Activated CD4-positive, alpha-beta T cell treated with anti-CD3 and anti-CD28 coated beads, Interleukin-2, amount 10 ng/mL, durations not matched to agents 24 days and 14 days (primary cell): ENCODE measurements at regions of chr6 and their contacts with region 1.

Region 1: GRCh38 chr6:109705258-109705657 is 14.2 kb downstream of the FIG4 start:
- DNase-seq: peak; percentile 91
- H3K4me3 Mint-ChIP-seq: no peak overlapping the region
- H3K27ac Mint-ChIP-seq: no peak overlapping the region
- H3K4me1 Mint-ChIP-seq: peaks cover 3% of the 10 kb centered on the region
- H3K27me3 Mint-ChIP-seq: no peaks in the 10 kb centered on the region

Region 2: DNA sequence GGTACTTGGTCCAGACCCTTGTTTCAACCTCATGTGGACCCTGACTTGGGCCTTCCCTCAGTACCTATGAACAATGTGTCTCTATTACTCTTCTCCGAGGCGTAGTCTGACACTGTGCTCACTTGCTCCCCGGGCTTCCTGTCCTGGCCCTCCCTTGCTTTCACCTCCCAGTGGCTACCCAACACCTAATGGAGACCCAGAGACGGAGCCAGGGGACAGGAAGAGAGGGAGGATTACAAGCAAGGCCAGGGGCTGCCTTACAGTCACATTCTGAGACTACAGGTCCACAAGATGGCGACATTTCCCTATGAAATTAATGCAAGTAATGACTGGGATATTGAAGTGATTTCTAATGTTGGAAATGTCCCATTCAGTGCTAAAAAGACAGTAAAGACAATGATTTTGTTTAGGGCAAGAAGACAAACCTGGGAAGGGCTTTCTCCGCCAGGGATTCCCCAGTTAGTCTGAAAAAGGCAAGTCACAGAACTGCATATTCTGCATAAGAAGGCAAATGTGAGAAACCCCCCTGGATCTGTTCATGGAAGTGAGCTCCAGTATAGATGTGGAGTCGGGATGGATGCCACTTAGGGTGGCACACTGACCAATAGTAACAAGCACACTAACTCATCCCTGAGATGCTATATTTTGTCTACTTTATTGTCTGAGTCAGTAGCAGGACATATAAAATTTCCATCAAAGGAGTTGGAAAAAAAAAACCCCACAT is 178.2 kb before region 1 on chr6:
- intact Hi-C with region 1: loop called (anchors 1 kb)
- DNase-seq: peak; percentile 89
- H3K4me3 Mint-ChIP-seq: no peak overlapping the region
- H3K27ac Mint-ChIP-seq: no peak overlapping the region
- H3K4me1 Mint-ChIP-seq: peaks cover 4% of the 10 kb centered on the region
- H3K27me3 Mint-ChIP-seq: peaks cover 8% of the 10 kb centered on the region

Region 3: DNA sequence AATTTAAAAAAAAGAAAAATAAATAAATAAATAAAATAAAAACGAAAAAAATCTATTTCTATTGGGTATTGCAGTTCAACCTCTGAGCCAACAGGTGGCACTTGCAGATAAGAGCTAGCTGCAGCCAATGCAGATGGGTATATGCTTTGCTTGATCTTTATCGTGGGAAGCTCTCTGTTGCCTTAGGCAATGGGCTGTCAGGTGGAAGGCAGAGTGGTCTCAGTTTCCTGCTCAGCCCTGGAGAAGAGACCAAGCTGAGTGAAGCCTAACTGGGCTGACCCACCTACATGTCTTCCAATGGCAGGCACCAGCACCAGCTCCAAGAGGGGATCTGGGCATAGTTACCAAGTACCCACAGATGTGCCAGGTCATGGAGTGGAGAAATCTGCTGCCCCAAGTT is 109.3 kb before region 1 on chr6:
- intact Hi-C with region 1: loop called (anchors 1 kb)
- DNase-seq: peak; percentile 63
- H3K4me3 Mint-ChIP-seq: no peak overlapping the region
- H3K27ac Mint-ChIP-seq: no peak overlapping the region
- H3K4me1 Mint-ChIP-seq: peaks cover 1% of the 10 kb centered on the region
- H3K27me3 Mint-ChIP-seq: no peaks in the 10 kb centered on the region

Region 4: DNA sequence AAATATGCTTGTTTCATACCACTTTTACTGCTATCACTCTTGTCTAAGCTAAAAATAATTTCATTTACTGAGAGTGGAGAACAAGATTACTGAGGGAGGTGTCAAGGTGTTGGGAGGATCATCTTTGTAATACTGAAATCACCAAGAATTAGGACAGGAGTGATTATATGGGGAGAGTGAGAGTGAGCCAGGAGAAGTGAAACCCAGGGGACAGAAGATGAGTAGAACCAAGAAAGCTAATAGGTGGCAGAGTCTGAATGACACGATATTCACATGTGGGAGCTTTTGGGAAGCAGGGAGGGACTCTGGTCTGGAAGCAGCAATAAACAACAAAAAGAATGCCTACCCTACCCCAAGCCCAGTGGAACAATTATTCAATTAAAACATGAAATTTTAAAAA is 72.9 kb before region 1 on chr6:
- intact Hi-C with region 1: no loop called
- DNase-seq: no peak
- H3K4me3 Mint-ChIP-seq: no peak overlapping the region
- H3K27ac Mint-ChIP-seq: no peak overlapping the region
- H3K4me1 Mint-ChIP-seq: peaks cover 9% of the 10 kb centered on the region
- H3K27me3 Mint-ChIP-seq: no peaks in the 10 kb centered on the region

Region 5: GRCh38 chr6:109867009-109867969 is 162.0 kb after region 1 on chr6:
- intact Hi-C with region 1: loop called (anchors 10 kb)
- DNase-seq: no peak
- H3K4me3 Mint-ChIP-seq: no peak overlapping the region
- H3K27ac Mint-ChIP-seq: no peak overlapping the region
- H3K4me1 Mint-ChIP-seq: no peaks in the 10 kb centered on the region
- H3K27me3 Mint-ChIP-seq: peaks cover 7% of the 10 kb centered on the region

Region 6: DNA sequence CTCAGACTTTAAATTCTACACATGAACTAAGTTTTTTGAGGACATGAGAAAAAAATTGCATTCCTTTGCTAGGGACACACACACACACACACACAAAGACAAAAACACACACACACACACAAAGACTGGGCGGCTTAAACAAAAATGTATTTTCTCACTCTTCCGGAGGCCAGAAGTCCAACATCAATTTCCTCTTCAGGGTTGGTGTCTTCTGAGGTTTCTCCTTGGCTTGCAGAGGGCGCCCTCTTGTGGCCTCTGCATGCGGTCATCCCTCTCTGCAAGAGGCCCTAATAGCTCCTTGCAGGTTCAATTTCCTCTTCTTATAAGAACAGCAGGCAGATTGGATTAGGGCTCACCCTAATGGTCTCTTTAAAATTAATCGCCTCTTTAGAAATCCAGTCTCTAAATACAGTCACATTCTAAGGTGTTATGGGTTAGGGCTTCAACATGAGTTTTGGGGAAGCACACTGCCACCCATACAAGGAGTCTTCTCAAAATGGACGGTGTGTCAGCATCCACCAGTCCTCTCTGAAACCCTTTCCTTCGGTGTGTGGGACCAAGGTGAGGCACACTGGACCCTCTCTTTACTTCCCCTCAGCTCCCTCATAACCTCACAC is 334.2 kb after region 1 on chr6:
- intact Hi-C with region 1: loop called (anchors 1 kb)
- DNase-seq: peak; percentile 94
- H3K4me3 Mint-ChIP-seq: peak overlapping the region; percentile 82
- H3K27ac Mint-ChIP-seq: peak overlapping the region; percentile 84
- H3K4me1 Mint-ChIP-seq: peaks cover 14% of the 10 kb centered on the region
- H3K27me3 Mint-ChIP-seq: peaks cover 1% of the 10 kb centered on the region

Region 7: GRCh38 chr6:110053395-110054240 is 348.4 kb after region 1 on chr6:
- intact Hi-C with region 1: loop called (anchors 1 kb)
- DNase-seq: peak; percentile 65
- H3K4me3 Mint-ChIP-seq: no peak overlapping the region
- H3K27ac Mint-ChIP-seq: no peak overlapping the region
- H3K4me1 Mint-ChIP-seq: no peaks in the 10 kb centered on the region
- H3K27me3 Mint-ChIP-seq: peaks cover 28% of the 10 kb centered on the region

Region 8: DNA sequence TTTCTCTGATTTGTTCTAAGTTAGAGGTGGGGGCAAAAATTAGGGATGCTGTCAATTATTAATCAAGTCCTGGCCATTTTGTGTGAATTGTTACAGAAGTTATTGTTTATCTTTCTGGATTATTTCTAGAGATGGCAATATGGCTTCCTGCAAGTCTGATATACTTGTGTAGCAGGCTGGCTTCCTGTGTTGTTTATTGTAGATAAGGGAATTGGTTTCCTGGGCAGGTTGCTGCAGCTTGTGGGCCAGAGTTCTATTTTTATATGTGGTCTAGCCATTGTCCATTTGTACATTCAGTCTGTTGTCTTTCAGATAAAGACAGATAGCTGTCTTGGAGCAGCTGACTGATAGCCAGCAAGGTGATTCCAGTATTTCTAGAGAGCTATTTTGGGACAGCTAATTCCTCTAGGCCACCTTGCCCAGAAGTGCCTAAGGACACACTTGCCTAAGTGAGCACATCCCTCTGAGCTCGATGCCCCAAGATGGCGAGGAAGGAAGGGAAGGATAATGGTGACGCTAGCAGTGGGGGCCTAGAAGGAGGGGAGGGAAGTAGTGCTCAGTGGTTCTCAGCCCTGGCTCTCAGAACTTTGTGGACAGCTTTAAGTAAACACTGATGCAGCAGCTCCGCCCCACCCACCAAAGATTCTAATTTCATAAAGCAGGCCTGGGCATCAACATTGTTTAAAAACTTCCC is 684.6 kb after region 1 on chr6:
- intact Hi-C with region 1: loop called (anchors 1 kb)
- DNase-seq: no peak
- H3K4me3 Mint-ChIP-seq: no peak overlapping the region
- H3K27ac Mint-ChIP-seq: no peak overlapping the region
- H3K4me1 Mint-ChIP-seq: peaks cover 5% of the 10 kb centered on the region
- H3K27me3 Mint-ChIP-seq: peaks cover 2% of the 10 kb centered on the region